ENCODE measurements at regions of chr6 and their contacts with region 1.

Region 1: DNA sequence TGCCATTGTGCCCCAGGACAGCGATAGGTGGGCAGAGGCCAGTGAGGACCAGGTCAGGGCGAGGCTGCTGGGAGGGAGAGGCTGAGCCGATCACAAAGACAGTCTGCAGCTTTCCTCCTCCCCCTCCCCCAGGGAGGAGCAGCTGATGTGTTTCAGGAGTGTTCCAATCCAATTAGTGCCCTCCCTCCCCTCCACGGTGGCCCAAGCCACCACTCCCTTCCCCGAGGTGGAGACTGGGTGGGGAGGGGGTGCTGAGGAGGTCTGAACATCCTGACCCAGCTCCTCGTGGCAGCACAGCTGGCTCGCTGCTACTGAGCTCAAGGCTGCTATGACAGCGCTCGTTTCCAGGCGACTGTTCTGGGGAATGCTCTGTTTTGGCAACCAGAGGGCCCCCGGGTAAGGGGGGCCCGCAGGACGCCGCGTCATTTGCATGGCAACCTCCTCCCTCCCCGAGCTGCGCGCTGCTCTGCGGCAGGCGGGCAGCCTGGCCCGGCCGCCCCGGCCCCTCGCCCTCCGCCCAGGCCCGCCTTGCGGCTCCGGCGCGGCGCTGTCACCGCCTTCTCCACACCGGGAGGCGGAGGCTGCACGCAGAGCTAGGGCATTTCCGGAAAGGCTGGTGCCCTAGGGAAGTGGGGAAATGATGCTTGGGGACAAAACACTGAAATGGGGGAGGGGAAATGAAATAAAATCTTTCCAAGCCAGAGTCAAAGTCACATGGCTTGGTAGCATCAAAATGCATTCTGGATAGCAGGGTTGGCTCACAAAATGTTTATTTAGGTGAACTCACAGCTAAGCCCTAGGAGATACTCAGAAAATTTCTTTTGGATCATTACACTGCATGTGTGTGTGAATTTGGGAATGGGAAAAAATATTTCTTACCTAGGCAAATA is 67.4 kb upstream of the PIM1 start:
- DNase-seq: peak; percentile 80 to 86
- H3K4me3 ChIP-seq: peak overlapping the region; percentile 26 to 66 (median 46)
- H3K27ac ChIP-seq: peak overlapping the region; percentile 81 to 82
- H3K4me1 ChIP-seq: peaks cover 0 to 3% of the 10 kb centered on the region in 2 donors
- H3K27me3 ChIP-seq: no peaks in the 10 kb centered on the region
- CTCF ChIP-seq: no peak
- POLR2A ChIP-seq: no peak

Region 2: DNA sequence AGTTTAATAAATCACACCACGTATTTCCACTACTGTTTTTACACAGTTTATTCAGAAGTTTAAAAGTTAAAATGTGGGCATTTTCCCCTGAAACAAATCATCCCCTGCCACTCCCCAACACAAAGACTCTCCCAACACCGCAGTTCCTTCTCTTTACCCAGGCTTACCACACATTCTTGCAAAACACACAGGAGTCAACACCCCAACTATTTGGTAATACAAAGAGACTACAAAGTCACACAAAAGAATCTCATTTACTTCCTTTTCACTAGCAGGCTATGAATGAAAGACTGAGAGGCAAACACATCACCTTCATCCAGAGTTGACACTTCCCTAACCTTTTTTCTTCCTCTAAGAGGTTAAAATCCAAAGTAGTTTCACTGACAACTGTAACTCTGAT is 608.7 kb before region 1 on chr6:
- intact Hi-C with region 1: loop called (anchors 5 kb)
- DNase-seq: no peak
- H3K4me3 ChIP-seq: no peak overlapping the region
- H3K27ac ChIP-seq: peak overlapping the region in 1 of 2 donors; percentile 14
- H3K4me1 ChIP-seq: no peaks in the 10 kb centered on the region
- H3K27me3 ChIP-seq: no peaks in the 10 kb centered on the region
- CTCF ChIP-seq: no peak
- POLR2A ChIP-seq: no peak

Region 3: GRCh38 chr6:37051138-37052026 is 51.1 kb before region 1 on chr6:
- intact Hi-C with region 1: no loop called
- DNase-seq: peak; percentile 81 to 85
- H3K4me3 ChIP-seq: peak overlapping the region in 1 of 3 donors; percentile 6
- H3K27ac ChIP-seq: no peak overlapping the region
- H3K4me1 ChIP-seq: peaks cover 0 to 3% of the 10 kb centered on the region in 2 donors
- H3K27me3 ChIP-seq: no peaks in the 10 kb centered on the region
- CTCF ChIP-seq: peak; percentile 53 to 92 (median 84)
- POLR2A ChIP-seq: no peak

Region 4: DNA sequence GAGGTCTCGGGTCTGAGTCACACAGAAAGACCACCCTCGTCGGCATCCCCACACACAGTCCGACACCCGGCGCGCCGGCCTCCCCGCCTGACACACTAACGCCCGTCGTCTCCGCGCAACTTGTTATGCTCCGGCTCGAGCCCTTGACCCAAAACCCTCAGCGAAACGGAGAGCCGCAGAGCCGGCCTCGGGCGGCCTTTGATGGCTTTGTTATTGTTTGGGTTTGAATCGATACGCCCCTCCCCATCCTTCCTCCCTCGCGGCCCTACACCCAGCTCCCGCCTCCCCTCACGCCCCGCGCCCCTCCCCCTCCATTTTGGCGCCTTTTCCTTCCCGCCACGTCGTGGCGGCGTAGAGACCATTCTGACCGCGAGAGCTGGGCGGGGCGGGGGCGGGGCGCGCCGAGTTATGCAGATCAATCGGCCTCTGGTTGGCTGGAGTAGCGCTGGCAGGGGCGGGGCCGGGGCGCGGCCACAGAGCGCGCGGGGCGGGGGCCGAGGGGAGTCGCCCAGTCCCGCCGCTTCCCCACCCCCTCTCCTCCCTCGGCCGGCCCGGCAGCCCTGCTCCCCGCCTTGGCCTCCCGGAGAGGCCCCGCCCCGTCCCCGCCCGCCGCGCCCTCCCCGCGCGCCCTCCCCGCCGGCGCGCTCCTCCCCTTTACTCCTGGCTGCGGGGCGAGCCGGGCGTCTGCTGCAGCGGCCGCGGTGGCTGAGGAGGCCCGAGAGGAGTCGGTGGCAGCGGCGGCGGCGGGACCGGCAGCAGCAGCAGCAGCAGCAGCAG is 67.2 kb after region 1 on chr6 and contains the start of gene PIM1:
- intact Hi-C with region 1: no loop called
- DNase-seq: peak; percentile 99
- H3K4me3 ChIP-seq: peak within 1 kb of the TSS; percentile 84 to 99 (median 89)
- H3K27ac ChIP-seq: peak within 1 kb of the TSS; percentile 93
- H3K4me1 ChIP-seq: peaks cover 0 to 7% of the 10 kb centered on the region in 2 donors
- H3K27me3 ChIP-seq: no peaks in the 10 kb centered on the region
- CTCF ChIP-seq: no peak
- POLR2A ChIP-seq: no peak
- total RNA-seq, gene PIM1: 17.4 to 56.0 (median 31.6) TPM

Region 5: GRCh38 chr6:38617856-38618255 is 1515.3 kb after region 1 on chr6:
- intact Hi-C with region 1: loop called (anchors 5 kb)
- DNase-seq: no peak
- H3K4me3 ChIP-seq: no peak overlapping the region
- H3K27ac ChIP-seq: no peak overlapping the region
- H3K4me1 ChIP-seq: no peaks in the 10 kb centered on the region
- H3K27me3 ChIP-seq: no peaks in the 10 kb centered on the region
- CTCF ChIP-seq: no peak
- POLR2A ChIP-seq: no peak